Activated CD8-positive, alpha-beta T cell treated with anti-CD3 and anti-CD28 coated beads, Interleukin-2, amount 10 ng/mL, durations not matched to agents 7 days and 5 days (primary cell): ENCODE measurements at regions of chr19 and their contacts with region 1.

Region 1: GRCh38 chr19:32599736-32600157 is 18.8 kb downstream of the PDCD5 start:
- DNase-seq: peak; percentile 69
- ATAC-seq: peak; percentile 65
- H3K4me3 Mint-ChIP-seq: no peak overlapping the region
- H3K27ac Mint-ChIP-seq: no peak overlapping the region
- H3K4me1 Mint-ChIP-seq: peaks cover 8% of the 10 kb centered on the region
- H3K27me3 Mint-ChIP-seq: no peaks in the 10 kb centered on the region

Region 2: DNA sequence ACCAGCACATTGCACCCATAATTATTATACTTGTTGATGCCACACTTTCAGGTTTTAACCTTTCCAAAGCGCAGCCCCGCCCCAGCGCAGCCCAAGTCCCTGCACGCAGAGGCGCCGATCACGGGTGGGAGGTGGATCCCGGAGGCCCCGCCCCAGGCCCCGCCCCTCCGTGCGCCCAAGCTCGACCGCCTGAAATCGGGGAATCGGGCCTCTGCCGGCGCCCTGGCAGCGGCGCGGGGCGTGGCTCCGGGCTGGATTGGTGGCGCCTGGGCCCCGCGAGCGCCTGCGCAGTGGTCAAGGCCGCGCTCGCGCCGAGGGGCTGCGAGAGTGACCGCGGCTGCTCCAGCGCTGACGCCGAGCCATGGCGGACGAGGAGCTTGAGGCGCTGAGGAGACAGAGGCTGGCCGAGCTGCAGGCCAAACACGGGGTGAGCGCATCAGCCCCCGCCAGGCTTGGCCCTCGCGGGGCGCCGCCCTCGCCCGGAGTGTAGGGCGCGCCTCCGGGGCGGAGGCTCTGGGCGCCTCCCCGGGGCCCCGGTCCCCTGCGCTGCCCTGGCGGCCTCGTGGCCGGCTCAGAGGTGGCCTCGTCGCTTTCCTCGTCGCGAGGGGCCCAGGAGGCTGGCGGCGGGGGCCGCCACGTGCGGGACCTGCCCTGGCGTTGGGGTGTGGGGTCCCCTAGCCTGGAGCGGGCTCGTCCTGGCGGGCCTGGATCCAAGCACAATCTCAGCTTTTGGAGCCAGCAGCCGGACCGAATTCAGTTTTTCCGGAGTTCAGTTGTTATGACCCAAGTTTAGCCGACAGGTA is 18.6 kb before region 1 on chr19 and contains the start of gene PDCD5:
- CTCF ChIA-PET with region 1: interaction called, 15 read pairs
- POLR2A ChIA-PET with region 1: no interaction called
- DNase-seq: peak; percentile 97
- ATAC-seq: peak; percentile 92
- H3K4me3 Mint-ChIP-seq: peak within 1 kb of the TSS; percentile 89
- H3K27ac Mint-ChIP-seq: peak within 1 kb of the TSS; percentile 85
- H3K4me1 Mint-ChIP-seq: peaks cover 38% of the 10 kb centered on the region
- H3K27me3 Mint-ChIP-seq: peaks cover 9% of the 10 kb centered on the region
- total RNA-seq, gene PDCD5: 147 to 159 TPM

Region 3: GRCh38 chr19:32647361-32647760 is 47.6 kb after region 1 on chr19:
- CTCF ChIA-PET with region 1: interaction called, 10 read pairs
- POLR2A ChIA-PET with region 1: interaction called, 3 read pairs
- DNase-seq: peak; percentile 52
- ATAC-seq: no peak
- H3K4me3 Mint-ChIP-seq: peak overlapping the region; percentile 48
- H3K27ac Mint-ChIP-seq: peak overlapping the region; percentile 78
- H3K4me1 Mint-ChIP-seq: peaks cover 48% of the 10 kb centered on the region
- H3K27me3 Mint-ChIP-seq: no peaks in the 10 kb centered on the region

Region 4: DNA sequence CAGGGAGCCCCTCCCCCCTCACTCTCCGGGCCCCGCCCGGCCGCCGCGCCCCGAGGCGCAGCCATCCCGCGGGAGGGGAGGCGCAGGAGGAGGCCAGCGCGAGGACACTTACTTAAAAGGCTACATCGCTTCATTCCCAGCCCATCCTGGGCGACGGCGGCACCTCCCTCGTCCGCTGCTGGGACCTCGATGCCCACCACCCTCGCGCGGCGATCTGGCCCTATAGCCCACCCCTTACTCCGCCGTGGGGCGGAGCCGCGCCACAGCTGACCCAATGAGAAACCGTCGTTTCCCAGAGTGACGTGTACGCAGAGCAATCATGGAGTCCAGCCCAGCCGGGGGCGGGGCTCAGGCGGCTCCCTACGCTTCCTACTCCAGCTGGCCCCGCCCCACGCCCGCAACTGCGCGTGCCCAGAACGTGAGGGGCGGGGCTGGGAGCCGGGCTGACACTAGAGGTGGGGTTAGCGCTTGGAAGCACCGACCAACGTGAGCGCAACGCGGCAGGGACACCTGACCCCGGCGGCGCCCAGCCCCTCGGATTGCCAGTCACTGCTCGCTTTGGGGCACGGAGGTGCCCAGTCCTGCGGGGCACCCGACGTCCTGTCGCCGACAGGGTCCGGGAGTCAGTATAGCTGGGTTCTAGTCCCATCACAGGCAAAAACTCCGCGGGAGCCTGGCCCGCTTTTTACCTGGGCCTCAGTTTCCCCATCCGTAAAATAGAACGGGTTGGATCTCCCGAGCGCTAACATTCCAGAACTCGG is 75.4 kb after region 1 on chr19 and contains the start of gene ANKRD27:
- CTCF ChIA-PET with region 1: interaction called, 12 read pairs
- POLR2A ChIA-PET with region 1: no interaction called
- DNase-seq: peak; percentile 98
- ATAC-seq: peak; percentile 98
- H3K4me3 Mint-ChIP-seq: peak within 1 kb of the TSS; percentile 90
- H3K27ac Mint-ChIP-seq: peak within 1 kb of the TSS; percentile 88
- H3K4me1 Mint-ChIP-seq: peaks cover 42% of the 10 kb centered on the region
- H3K27me3 Mint-ChIP-seq: peaks cover 21% of the 10 kb centered on the region
- total RNA-seq, gene ANKRD27: 45.1 to 45.3 TPM